H1 (cell line): ENCODE measurements at regions of chr18 and their contacts with region 1.

Region 1: GRCh38 chr18:8705280-8705940 is at the start of gene MTCL1:
- DNase-seq: peak in 1 of 2 experiments; percentile 70
- H3K4me3 ChIP-seq: peak within 1 kb of the TSS; percentile 59 to 72 (median 70)
- H3K27ac ChIP-seq: no peak within 1 kb of the TSS
- H3K4me1 ChIP-seq: peaks cover 13 to 23% (median 19%) of the 10 kb centered on the region in 4 experiments
- H3K27me3 ChIP-seq: peaks cover 0 to 7% (median 5%) of the 10 kb centered on the region in 4 experiments; a peak in 5 of 7 replicates
- CTCF ChIP-seq: no peak
- EP300 ChIP-seq: no peak
- POLR2A ChIP-seq: no peak
- RAD21 ChIP-seq: no peak
- total RNA-seq, gene MTCL1: 60.8 and 62.0 TPM in 2 replicates

Region 2: GRCh38 chr18:8601277-8602032 is 104.0 kb before region 1 on chr18:
- CTCF ChIA-PET with region 1: no interaction called
- POLR2A ChIA-PET with region 1: no interaction called
- DNase-seq: no peak
- H3K4me3 ChIP-seq: no peak overlapping the region
- H3K27ac ChIP-seq: no peak overlapping the region
- H3K4me1 ChIP-seq: peaks cover 0 to 3% (median 0%) of the 10 kb centered on the region in 4 experiments; a peak in 1 of 7 replicates
- H3K27me3 ChIP-seq: no peaks in the 10 kb centered on the region
- CTCF ChIP-seq: no peak
- EP300 ChIP-seq: no peak
- POLR2A ChIP-seq: no peak
- RAD21 ChIP-seq: no peak

Region 3: DNA sequence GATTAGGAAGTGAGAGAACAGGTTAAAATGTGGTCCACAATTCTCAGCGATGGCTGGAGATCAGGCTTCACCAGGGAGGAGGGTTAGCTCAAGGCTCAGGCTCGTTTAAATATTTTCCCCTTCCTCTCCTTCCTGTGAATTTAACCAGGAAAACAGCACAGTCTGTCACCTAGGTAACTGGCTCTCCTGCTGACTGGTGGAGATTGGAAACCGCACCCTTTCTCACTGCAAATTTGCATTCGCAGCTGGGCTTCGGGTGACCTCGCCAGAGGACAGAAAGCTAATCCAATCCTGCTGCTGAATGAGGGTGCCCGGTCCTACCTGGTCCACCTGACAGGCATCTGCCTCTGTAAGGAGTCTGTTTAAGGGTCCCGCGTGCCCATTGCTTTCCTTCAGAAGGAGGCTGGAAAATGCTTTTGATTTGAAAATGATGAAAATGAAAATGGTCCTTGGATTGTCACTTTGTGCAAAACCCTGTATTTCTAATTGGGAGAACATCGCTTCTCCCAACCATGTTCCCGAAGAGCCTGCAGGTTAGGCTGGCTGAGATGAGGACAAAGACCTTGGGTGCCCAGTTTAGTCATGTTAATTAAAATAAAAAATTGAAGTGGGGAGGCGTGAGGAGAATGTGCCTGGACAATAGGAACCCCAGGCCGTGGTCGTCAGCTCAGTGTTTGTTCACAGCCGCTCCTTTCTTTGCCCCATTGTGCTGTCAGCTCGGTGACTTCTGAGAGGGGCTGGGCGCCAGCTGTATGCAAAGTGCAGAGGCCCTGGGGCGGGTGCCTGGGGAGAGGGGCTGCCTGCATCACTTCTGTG is 43.4 kb before region 1 on chr18:
- CTCF ChIA-PET with region 1: interaction called, 12 read pairs
- POLR2A ChIA-PET with region 1: interaction called, 4 read pairs
- DNase-seq: peak; percentile 56 to 72
- H3K4me3 ChIP-seq: peak overlapping the region in 2 of 4 experiments; percentile 15 to 46; a peak in 4 of 8 replicates
- H3K27ac ChIP-seq: peak overlapping the region; percentile 28
- H3K4me1 ChIP-seq: peaks cover 5 to 21% (median 13%) of the 10 kb centered on the region in 4 experiments
- H3K27me3 ChIP-seq: no peaks in the 10 kb centered on the region
- CTCF ChIP-seq: no peak
- EP300 ChIP-seq: 0 out of 3 replicates have a peak, but pooled peaks of 1 of the 2 experiments have one; percentile 11
- POLR2A ChIP-seq: no peak; a peak in 1 of 3 replicates
- RAD21 ChIP-seq: no peak

Region 4: GRCh38 chr18:8721716-8722115 is 16.3 kb after region 1 on chr18:
- CTCF ChIA-PET with region 1: interaction called, 13 read pairs
- POLR2A ChIA-PET with region 1: interaction called, 12 read pairs
- DNase-seq: no peak
- H3K4me3 ChIP-seq: no peak overlapping the region
- H3K27ac ChIP-seq: no peak overlapping the region
- H3K4me1 ChIP-seq: peaks cover 12 to 29% (median 21%) of the 10 kb centered on the region in 4 experiments
- H3K27me3 ChIP-seq: no peaks in the 10 kb centered on the region
- CTCF ChIP-seq: no peak
- EP300 ChIP-seq: no peak
- POLR2A ChIP-seq: no peak
- RAD21 ChIP-seq: no peak

Region 5: DNA sequence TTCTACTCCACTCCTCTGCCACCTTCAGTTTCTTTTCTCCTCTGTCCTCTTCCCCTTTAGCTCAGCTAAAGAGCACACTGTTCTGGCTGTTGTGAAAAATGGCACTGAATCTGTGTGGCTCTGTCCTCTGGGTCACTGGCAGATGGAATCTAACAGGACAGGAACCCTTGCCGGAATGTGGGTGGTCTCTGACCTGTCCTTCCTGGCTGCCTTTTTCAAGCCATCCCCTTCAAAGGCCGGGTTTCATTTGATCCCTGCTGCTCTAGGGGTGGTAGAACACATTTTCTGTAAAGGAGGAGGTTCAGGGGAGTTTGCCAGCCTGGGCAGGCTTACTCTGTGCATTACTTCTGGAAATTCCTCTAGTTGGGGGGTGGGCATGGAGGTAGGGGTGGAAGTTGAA is 29.9 kb after region 1 on chr18:
- CTCF ChIA-PET with region 1: interaction called, 14 read pairs
- POLR2A ChIA-PET with region 1: no interaction called
- DNase-seq: no peak
- H3K4me3 ChIP-seq: no peak overlapping the region
- H3K27ac ChIP-seq: no peak overlapping the region
- H3K4me1 ChIP-seq: peaks cover 2 to 14% (median 9%) of the 10 kb centered on the region in 4 experiments
- H3K27me3 ChIP-seq: no peaks in the 10 kb centered on the region
- CTCF ChIP-seq: no peak
- EP300 ChIP-seq: no peak
- POLR2A ChIP-seq: no peak
- RAD21 ChIP-seq: no peak